ENCODE measurements at regions of chr3 and their contacts with region 1.

Region 1: DNA sequence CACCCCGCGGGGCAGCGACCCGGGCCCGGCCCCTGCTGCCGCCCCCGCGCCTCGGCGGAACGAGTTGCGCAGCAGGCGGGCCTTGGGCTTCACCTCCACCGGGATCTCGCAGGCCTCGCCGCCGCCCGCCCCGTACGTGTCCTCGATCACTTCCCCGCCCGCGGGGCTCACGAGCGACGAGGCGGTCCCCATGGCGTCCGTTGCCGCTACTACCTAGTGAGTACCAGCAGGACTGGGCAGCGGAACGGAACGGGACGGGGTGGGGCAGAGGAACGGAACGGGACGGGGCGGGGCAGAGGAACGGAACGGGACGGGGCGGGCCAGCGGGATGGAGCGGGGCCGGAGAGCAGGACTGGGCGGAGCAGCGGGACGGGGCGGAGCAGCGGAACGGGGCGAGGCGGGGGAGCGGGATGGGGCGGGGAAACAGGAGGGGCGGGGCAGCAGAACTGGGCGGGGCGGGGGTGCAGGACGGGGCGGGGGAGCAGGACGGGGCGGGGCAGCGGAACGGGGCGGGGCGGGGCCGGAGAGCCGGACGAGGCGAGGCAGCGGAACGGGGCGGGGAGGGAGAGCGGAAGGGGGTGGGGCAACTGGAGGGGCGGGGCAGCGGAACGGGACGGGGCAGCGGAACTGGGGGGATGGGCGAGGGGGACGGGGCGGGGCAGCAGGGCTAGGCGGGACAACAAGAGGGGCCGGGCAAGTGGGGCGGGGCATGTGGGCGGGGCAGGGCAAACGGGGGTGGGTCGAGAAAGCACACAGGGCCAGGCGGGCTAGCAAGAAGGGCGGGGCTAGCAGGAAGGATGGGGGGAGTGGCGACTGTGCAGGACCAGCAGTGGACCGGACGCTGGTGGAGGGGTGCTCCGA is at the start of gene NPHP3:
- DNase-seq: peak; percentile 91
- H3K4me3 ChIP-seq: peak within 1 kb of the TSS; percentile 82
- H3K27ac ChIP-seq: peak within 1 kb of the TSS; percentile 27
- H3K4me1 ChIP-seq: peaks cover 14% of the 10 kb centered on the region
- CTCF ChIP-seq: no peak
- total RNA-seq, gene NPHP3: 7.9 and 10.6 TPM in 2 replicates

Region 2: GRCh38 chr3:132659365-132660051 is 62.9 kb before region 1 on chr3 and contains the start of gene ACAD11:
- CTCF ChIA-PET with region 1: no interaction called
- POLR2A ChIA-PET with region 1: interaction called, 3 read pairs
- intact Hi-C with region 1: loop called (anchors 1 kb)
- DNase-seq: peak; percentile 67
- H3K4me3 ChIP-seq: peak within 1 kb of the TSS; percentile 78
- H3K27ac ChIP-seq: peak within 1 kb of the TSS; percentile 56
- H3K4me1 ChIP-seq: peaks cover 24% of the 10 kb centered on the region
- CTCF ChIP-seq: peak; percentile 83
- total RNA-seq, gene ACAD11: 18.5 and 25.7 TPM in 2 replicates

Region 3: GRCh38 chr3:133211449-133211848 is 489.1 kb after region 1 on chr3:
- CTCF ChIA-PET with region 1: no interaction called
- POLR2A ChIA-PET with region 1: no interaction called
- intact Hi-C with region 1: loop called (anchors 10 kb)
- DNase-seq: peak; percentile 86
- H3K4me3 ChIP-seq: peak overlapping the region; percentile 46
- H3K27ac ChIP-seq: peak overlapping the region; percentile 35
- H3K4me1 ChIP-seq: peaks cover 40% of the 10 kb centered on the region
- CTCF ChIP-seq: no peak

Region 4: DNA sequence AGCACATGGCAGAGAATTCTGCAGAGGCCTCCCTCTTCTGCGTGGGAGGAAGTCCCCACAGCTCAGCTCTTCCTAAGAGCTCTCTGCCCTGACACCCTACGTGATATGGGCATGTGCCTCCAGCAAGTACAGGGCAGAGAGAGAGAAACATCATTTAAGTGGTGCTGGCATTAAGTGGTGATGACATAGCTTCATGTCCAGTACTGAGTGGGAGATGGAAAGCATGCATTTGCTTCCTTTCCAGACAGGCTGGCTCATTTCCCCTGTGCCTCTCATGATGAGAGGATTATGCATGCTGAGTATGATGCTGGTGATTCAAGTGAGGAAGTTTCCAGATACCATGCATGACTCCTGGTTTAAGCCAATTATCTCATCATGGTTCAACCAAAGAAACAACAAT is 704.3 kb after region 1 on chr3:
- CTCF ChIA-PET with region 1: no interaction called
- POLR2A ChIA-PET with region 1: interaction called, 4 read pairs
- intact Hi-C with region 1: loop called (anchors 5 kb)
- DNase-seq: no peak
- H3K4me3 ChIP-seq: no peak overlapping the region
- H3K27ac ChIP-seq: no peak overlapping the region
- H3K4me1 ChIP-seq: peaks cover 4% of the 10 kb centered on the region
- CTCF ChIP-seq: no peak

Region 5: GRCh38 chr3:133661454-133662277 is 939.3 kb after region 1 on chr3 and contains the start of gene TOPBP1:
- CTCF ChIA-PET with region 1: no interaction called
- POLR2A ChIA-PET with region 1: no interaction called
- intact Hi-C with region 1: loop called (anchors 5 kb)
- DNase-seq: peak; percentile 92
- H3K4me3 ChIP-seq: peak within 1 kb of the TSS; percentile 99
- H3K27ac ChIP-seq: peak within 1 kb of the TSS; percentile 76
- H3K4me1 ChIP-seq: peaks cover 39% of the 10 kb centered on the region
- CTCF ChIP-seq: no peak
- total RNA-seq, gene TOPBP1: 139 and 167 TPM in 2 replicates

Region 6: DNA sequence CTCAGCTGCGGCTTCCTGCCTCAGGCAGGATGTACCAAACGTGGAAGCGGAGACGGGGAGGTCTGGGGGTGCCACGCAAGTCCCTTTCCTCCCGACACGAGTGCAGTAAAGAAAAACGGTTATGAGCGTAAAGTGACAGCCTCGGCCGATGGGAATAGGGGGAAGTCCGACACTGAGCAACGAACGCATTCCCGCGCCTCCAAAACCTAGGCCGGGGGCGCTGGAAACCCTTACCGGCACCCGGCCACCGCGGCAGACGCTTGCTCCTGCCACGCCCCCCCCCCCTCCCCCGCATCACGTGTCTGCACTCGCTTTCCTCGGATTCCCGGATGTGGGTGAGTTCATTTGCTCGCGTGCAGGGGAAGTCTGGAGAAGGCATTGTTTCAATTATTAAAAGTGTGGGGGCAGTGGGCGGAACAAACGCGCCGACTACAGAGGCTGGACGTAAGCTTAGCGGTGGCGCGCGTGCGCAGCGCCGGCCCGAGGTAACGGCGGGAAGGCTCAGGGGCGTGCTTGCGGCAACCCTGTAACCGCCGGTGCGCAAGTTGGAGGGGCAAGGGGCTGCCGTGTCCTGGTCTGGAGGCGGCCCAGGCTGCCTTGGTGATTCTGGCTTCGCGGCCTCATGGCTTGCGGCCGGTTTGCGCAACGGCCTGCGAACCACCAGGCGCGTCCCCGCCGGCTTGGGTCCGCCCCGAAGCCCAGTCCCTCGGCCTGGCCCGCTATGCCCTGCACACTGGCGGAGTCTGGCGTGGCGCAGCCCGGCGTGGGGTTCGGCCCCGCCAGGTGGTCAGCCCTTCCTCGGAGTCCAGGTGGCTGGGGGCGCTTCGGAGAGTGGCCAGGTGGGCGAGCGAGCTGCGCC is 1763.6 kb after region 1 on chr3 and contains the starts of genes ANAPC13 and CEP63:
- CTCF ChIA-PET with region 1: no interaction called
- POLR2A ChIA-PET with region 1: no interaction called
- intact Hi-C with region 1: loop called (anchors 5 kb)
- DNase-seq: peak; percentile 99
- H3K4me3 ChIP-seq: peak within 1 kb of the TSS; percentile 81
- H3K27ac ChIP-seq: peak within 1 kb of the TSS; percentile 83
- H3K4me1 ChIP-seq: peaks cover 23% of the 10 kb centered on the region
- CTCF ChIP-seq: no peak
- total RNA-seq, gene ANAPC13: 29.8 and 57.8 TPM in 2 replicates
- total RNA-seq, gene CEP63: 21.1 and 45.7 TPM in 2 replicates